Activated CD8-positive, alpha-beta T cell treated with anti-CD3 and anti-CD28 coated beads for 36 hours (primary cell): ENCODE measurements at regions of chr16 and their contacts with region 1.

Region 1: DNA sequence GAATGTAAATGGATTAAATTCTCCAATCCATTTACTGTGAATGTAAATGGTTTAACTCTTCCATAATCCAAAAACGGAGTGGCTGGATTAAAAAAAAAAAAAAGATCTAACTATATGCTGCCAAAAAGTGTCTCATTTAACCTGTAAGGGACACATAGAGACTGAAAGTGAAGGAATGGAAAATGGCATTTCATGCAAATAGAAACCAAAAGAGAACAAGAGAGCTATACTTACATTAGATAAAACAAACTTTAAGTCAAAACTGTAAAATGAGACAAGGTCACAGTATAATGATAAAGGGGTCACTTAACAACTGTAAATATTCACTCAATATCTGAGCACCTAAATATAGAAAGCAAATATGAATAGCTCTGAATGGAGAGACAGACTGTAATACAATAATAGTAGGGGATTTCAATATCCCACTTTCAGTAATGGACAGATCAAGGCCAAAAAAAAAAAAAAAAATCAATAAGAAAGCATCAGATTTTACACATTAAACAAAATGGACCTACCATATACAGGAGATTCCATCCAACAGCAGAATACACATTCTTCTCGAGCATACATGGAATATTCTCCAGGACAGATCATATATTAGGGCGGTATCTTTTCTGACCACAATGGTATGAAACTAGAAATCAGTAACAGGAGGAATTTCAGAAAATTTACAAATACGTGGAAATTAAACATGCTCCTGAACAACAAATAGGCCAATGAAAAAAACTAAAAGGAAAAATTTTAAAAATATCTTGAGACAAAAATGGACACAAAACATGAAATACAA is 36.4 kb downstream of the CDR2 start:
- DNase-seq: no peak
- ATAC-seq: peak; percentile 73
- H3K4me3 Mint-ChIP-seq: no peak overlapping the region
- H3K27ac Mint-ChIP-seq: peak overlapping the region; percentile 30
- H3K4me1 Mint-ChIP-seq: peaks cover 20% of the 10 kb centered on the region
- H3K27me3 Mint-ChIP-seq: no peaks in the 10 kb centered on the region
- CTCF ChIP-seq: no peak

Region 2: DNA sequence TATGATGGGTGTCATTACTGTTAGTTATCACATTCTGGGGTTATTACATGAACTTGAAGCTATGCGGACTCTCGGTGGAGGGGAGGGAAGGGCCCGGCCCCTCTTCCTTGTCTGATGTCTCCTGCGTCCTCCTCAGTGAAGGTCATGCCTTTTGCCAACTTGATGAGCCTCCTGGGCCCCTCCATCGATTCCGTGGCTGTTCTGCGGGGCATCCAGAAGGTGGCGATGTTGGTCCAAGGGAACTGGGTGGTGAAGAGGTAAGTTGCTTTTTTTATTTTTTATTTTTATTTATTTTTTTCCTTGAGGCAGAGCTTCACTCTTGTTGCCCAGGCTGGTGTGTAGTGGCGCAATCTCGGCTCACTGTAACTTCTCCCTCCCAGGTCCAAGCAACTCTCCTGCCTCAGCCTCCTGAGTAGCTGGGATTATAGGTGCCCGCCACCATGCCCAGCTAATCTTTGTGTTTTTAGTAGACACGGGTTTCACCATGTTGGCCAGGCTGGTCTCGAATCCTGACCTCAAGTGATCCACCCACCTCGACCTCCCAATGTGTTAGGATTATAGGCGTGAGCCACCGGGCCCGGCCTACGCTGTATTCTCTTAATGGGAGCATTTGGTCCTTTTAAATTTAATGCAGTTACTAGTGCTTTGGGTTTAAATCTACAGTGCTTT is 19.2 kb before region 1 on chr16:
- CTCF ChIA-PET with region 1: interaction called, 13 read pairs
- POLR2A ChIA-PET with region 1: no interaction called
- intact Hi-C with region 1: no loop called
- DNase-seq: peak; percentile 63
- ATAC-seq: peak; percentile 49
- H3K4me3 Mint-ChIP-seq: no peak overlapping the region
- H3K27ac Mint-ChIP-seq: no peak overlapping the region
- H3K4me1 Mint-ChIP-seq: peaks cover 3% of the 10 kb centered on the region
- H3K27me3 Mint-ChIP-seq: no peaks in the 10 kb centered on the region
- CTCF ChIP-seq: peak; percentile 79

Region 3: DNA sequence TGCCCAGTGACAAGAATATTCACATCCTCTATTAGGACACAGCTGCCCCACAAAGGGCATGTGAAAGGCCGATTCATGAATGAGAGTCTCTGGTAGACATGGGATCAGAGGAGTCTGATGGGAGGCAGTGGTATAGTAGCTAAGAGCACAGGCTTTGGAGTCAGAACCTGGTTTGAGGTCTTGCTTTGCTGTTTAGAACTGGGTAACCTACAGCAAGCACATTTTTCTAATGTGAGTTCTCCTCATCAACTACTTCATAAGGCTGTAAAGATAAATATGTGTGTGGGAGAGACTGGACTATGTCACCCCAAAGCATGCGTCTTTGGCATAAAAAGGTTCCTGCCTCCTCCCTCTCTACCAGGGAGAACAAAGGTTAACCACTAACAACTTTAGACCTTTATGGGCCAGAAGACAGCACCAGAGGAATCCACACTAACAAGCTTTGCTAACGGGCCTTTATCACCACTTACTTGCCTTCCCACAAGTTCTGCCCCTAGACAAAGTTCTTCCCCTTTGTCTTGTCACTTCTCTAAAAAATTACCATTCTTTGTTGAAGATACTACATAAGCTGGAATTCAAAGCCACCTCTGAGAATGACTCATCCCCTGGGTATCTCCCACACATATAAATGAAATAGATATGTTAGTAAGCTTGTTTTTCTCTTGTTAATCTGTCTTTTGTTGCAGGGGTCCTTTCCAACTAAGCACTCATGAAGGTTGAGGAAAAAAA is 15.3 kb after region 1 on chr16:
- CTCF ChIA-PET with region 1: interaction called, 3 read pairs
- POLR2A ChIA-PET with region 1: interaction called, 20 read pairs
- intact Hi-C with region 1: no loop called
- DNase-seq: peak; percentile 27
- ATAC-seq: peak; percentile 67
- H3K4me3 Mint-ChIP-seq: peak overlapping the region; percentile 46
- H3K27ac Mint-ChIP-seq: peak overlapping the region; percentile 97
- H3K4me1 Mint-ChIP-seq: peaks cover 58% of the 10 kb centered on the region
- H3K27me3 Mint-ChIP-seq: no peaks in the 10 kb centered on the region
- CTCF ChIP-seq: no peak

Region 4: GRCh38 chr16:22386976-22387375 is 48.9 kb after region 1 on chr16:
- CTCF ChIA-PET with region 1: no interaction called
- POLR2A ChIA-PET with region 1: no interaction called
- intact Hi-C with region 1: no loop called
- DNase-seq: no peak
- ATAC-seq: no peak
- H3K4me3 Mint-ChIP-seq: no peak overlapping the region
- H3K27ac Mint-ChIP-seq: no peak overlapping the region
- H3K4me1 Mint-ChIP-seq: peaks cover 5% of the 10 kb centered on the region
- H3K27me3 Mint-ChIP-seq: no peaks in the 10 kb centered on the region
- CTCF ChIP-seq: no peak

Region 5: GRCh38 chr16:22397464-22397863 is 59.4 kb after region 1 on chr16:
- CTCF ChIA-PET with region 1: no interaction called
- POLR2A ChIA-PET with region 1: no interaction called
- intact Hi-C with region 1: no loop called
- DNase-seq: no peak
- ATAC-seq: no peak
- H3K4me3 Mint-ChIP-seq: no peak overlapping the region
- H3K27ac Mint-ChIP-seq: no peak overlapping the region
- H3K4me1 Mint-ChIP-seq: no peaks in the 10 kb centered on the region
- H3K27me3 Mint-ChIP-seq: no peaks in the 10 kb centered on the region
- CTCF ChIP-seq: no peak